Caco-2 (cell line): ENCODE measurements at regions of chr10 and their contacts with region 1.

Region 1: GRCh38 chr10:113958631-113959382 is 84.9 kb upstream of the ADRB1 start:
- DNase-seq: peak; percentile 86 to 93
- H3K4me3 ChIP-seq: no peak overlapping the region
- H3K4me3 Mint-ChIP-seq: peak overlapping the region; percentile 39
- H3K27ac Mint-ChIP-seq: peak overlapping the region; percentile 84
- H3K4me1 ChIP-seq: peaks cover 51% of the 10 kb centered on the region
- H3K4me1 Mint-ChIP-seq: peaks cover 41% of the 10 kb centered on the region
- H3K27me3 ChIP-seq: no peaks in the 10 kb centered on the region
- H3K27me3 Mint-ChIP-seq: no peaks in the 10 kb centered on the region
- CTCF ChIP-seq: no peak

Region 2: DNA sequence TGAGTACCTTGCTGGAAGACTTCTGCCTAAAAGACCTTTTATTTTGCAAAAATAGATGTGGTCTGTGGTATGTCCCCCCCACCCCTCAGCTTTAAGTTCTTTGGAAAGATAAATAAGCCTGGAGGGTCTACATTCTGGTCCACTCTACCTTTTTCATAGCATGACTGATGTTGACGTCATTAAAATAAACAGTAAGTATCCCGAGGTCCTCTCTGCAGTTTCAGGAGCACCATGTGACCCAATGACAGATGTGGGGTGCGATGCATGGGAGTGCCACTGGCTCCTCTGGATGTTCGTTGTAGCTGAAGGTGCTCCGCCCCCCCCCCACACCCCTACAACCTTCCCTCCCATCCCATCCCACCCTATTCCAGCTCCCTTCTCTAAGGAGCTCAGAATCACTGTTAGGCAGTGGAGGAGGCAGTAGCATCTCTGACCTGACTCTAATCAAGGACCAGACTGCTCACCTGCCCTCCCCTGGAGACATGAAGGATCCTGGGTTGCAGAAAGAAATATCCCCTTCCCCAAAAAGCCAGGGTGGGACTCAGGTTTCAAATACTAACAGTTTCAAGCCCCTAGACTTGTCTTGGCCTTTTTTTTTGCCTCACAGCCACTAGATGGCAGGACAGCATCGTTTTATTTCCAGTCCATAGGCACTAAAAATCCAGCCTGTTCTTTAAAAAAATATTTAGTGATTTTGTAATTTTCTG is 254.0 kb before region 1 on chr10:
- CTCF ChIA-PET with region 1: no interaction called
- POLR2A ChIA-PET with region 1: interaction called, 12 read pairs
- intact Hi-C with region 1: no loop called
- DNase-seq: peak in 1 of 2 experiments; percentile 45
- H3K4me3 ChIP-seq: no peak overlapping the region
- H3K4me3 Mint-ChIP-seq: no peak overlapping the region
- H3K27ac Mint-ChIP-seq: no peak overlapping the region
- H3K4me1 ChIP-seq: no peaks in the 10 kb centered on the region
- H3K4me1 Mint-ChIP-seq: no peaks in the 10 kb centered on the region
- H3K27me3 ChIP-seq: no peaks in the 10 kb centered on the region
- H3K27me3 Mint-ChIP-seq: no peaks in the 10 kb centered on the region
- CTCF ChIP-seq: peak; percentile 71 to 76

Region 3: GRCh38 chr10:113879691-113880090 is 79.1 kb before region 1 on chr10:
- CTCF ChIA-PET with region 1: no interaction called
- POLR2A ChIA-PET with region 1: no interaction called
- intact Hi-C with region 1: no loop called
- DNase-seq: no peak
- H3K4me3 ChIP-seq: no peak overlapping the region
- H3K4me3 Mint-ChIP-seq: no peak overlapping the region
- H3K27ac Mint-ChIP-seq: no peak overlapping the region
- H3K4me1 ChIP-seq: no peaks in the 10 kb centered on the region
- H3K4me1 Mint-ChIP-seq: peaks cover 11% of the 10 kb centered on the region
- H3K27me3 ChIP-seq: no peaks in the 10 kb centered on the region
- H3K27me3 Mint-ChIP-seq: no peaks in the 10 kb centered on the region
- CTCF ChIP-seq: no peak

Region 4: DNA sequence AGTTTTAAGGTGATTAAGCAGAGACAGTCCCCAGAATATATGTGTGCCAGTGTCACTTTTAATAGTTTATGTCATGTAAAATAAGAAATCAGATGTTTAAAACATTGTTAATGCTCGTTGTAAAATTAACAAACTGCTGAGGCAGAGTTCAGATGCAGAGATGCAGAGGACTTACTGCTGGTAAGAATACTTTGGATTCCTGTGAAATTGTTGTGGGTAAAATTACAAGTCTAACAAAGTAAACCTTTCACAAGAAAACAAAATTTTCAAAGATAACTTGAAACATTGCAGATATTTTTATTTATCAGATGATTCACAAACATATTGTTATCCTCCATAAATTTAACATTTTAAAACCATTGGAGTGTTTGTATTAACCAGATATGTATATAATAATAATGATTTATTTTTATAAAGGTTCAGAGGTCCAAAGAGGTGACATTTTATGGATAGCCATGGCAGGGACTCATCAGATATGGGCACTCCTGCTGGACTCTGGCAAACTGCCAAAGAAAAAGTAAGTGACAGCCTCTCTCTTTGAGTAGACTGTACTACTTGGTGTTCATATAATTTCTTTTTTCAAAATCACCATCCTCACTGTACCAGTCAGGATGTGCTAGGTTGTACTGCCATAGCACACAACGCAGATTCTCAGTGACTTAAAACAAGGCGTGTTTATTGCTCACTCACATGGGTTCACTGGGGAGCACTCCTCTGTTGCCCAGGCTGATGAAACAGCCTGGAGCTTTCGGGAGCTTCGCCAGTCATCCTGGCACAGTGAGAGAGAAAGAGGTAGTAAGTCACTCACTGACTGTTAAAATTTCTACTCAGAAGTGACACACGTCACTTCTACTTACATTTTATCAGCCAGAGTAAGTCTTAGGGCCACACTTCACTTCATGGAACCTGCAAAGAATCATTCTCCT is 60.9 kb before region 1 on chr10:
- CTCF ChIA-PET with region 1: no interaction called
- POLR2A ChIA-PET with region 1: no interaction called
- intact Hi-C with region 1: no loop called
- DNase-seq: no peak
- H3K4me3 ChIP-seq: no peak overlapping the region
- H3K4me3 Mint-ChIP-seq: no peak overlapping the region
- H3K27ac Mint-ChIP-seq: no peak overlapping the region
- H3K4me1 ChIP-seq: peaks cover 27% of the 10 kb centered on the region
- H3K4me1 Mint-ChIP-seq: peaks cover 24% of the 10 kb centered on the region
- H3K27me3 ChIP-seq: no peaks in the 10 kb centered on the region
- H3K27me3 Mint-ChIP-seq: no peaks in the 10 kb centered on the region
- CTCF ChIP-seq: no peak

Region 5: GRCh38 chr10:113921561-113922289 is 37.1 kb before region 1 on chr10:
- CTCF ChIA-PET with region 1: no interaction called
- POLR2A ChIA-PET with region 1: no interaction called
- intact Hi-C with region 1: loop called (anchors 1 kb)
- DNase-seq: no peak
- H3K4me3 ChIP-seq: no peak overlapping the region
- H3K4me3 Mint-ChIP-seq: no peak overlapping the region
- H3K27ac Mint-ChIP-seq: no peak overlapping the region
- H3K4me1 ChIP-seq: no peaks in the 10 kb centered on the region
- H3K4me1 Mint-ChIP-seq: peaks cover 5% of the 10 kb centered on the region
- H3K27me3 ChIP-seq: no peaks in the 10 kb centered on the region
- H3K27me3 Mint-ChIP-seq: no peaks in the 10 kb centered on the region
- CTCF ChIP-seq: no peak

Region 6: GRCh38 chr10:113945075-113945686 is 13.6 kb before region 1 on chr10:
- CTCF ChIA-PET with region 1: no interaction called
- POLR2A ChIA-PET with region 1: no interaction called
- intact Hi-C with region 1: loop called (anchors 1 kb)
- DNase-seq: peak; percentile 67 to 77
- H3K4me3 ChIP-seq: no peak overlapping the region
- H3K4me3 Mint-ChIP-seq: no peak overlapping the region
- H3K27ac Mint-ChIP-seq: peak overlapping the region; percentile 62
- H3K4me1 ChIP-seq: peaks cover 31% of the 10 kb centered on the region
- H3K4me1 Mint-ChIP-seq: peaks cover 24% of the 10 kb centered on the region
- H3K27me3 ChIP-seq: no peaks in the 10 kb centered on the region
- H3K27me3 Mint-ChIP-seq: no peaks in the 10 kb centered on the region
- CTCF ChIP-seq: no peak